GM10248 (cell line): ENCODE measurements at regions of chr16 and their contacts with region 1.

Region 1: GRCh38 chr16:22190776-22191531 is 15.1 kb upstream of the EEF2K start:
- DNase-seq: peak; percentile 95
- CTCF ChIP-seq: no peak

Region 2: DNA sequence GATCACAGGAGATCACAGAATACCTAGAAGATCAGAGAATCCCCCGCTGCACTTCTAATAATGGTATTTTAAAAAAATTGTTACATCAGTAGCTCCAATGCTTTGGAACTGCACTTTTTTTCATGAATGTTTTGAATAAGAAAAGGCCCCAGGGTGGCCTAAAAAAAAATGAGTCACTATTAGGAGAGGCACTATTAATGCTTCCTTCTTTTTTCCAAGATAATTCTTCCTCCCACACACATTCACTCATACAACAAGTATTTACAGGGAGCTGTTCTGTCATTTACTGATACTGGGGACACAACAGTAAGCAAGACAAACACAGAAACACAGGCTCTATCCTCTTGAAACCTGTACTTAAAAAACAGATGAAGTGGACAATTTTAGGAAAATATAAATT is 189.4 kb before region 1 on chr16:
- CTCF ChIA-PET with region 1: interaction called, 40 read pairs
- POLR2A ChIA-PET with region 1: no interaction called
- DNase-seq: no peak
- CTCF ChIP-seq: no peak

Region 3: GRCh38 chr16:22007509-22008214 is 183.3 kb before region 1 on chr16 and contains the start of gene MOSMO:
- CTCF ChIA-PET with region 1: interaction called, 21 read pairs
- POLR2A ChIA-PET with region 1: no interaction called
- DNase-seq: peak; percentile 89
- CTCF ChIP-seq: no peak

Region 4: DNA sequence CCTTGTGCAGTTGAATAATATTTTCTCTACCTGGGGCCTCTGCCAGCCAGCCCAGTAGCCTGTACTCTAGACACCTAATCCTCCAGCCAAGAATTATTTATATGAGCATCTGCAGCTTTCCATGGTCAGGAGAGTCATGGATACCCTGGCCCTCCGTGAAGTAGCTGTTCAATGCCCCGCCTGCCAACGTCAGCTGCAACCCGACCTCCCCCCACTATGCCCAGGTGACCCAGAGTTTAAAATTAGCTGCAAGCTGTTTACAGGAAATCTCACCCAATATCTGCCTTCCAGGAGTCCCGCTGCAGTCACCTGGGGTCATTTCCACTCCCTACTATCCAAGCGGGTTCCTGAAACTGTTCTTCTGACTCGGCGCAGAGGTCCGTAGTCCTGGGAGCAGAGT is 16.3 kb before region 1 on chr16:
- CTCF ChIA-PET with region 1: interaction called, 12 read pairs
- POLR2A ChIA-PET with region 1: no interaction called
- DNase-seq: no peak
- CTCF ChIP-seq: no peak

Region 5: DNA sequence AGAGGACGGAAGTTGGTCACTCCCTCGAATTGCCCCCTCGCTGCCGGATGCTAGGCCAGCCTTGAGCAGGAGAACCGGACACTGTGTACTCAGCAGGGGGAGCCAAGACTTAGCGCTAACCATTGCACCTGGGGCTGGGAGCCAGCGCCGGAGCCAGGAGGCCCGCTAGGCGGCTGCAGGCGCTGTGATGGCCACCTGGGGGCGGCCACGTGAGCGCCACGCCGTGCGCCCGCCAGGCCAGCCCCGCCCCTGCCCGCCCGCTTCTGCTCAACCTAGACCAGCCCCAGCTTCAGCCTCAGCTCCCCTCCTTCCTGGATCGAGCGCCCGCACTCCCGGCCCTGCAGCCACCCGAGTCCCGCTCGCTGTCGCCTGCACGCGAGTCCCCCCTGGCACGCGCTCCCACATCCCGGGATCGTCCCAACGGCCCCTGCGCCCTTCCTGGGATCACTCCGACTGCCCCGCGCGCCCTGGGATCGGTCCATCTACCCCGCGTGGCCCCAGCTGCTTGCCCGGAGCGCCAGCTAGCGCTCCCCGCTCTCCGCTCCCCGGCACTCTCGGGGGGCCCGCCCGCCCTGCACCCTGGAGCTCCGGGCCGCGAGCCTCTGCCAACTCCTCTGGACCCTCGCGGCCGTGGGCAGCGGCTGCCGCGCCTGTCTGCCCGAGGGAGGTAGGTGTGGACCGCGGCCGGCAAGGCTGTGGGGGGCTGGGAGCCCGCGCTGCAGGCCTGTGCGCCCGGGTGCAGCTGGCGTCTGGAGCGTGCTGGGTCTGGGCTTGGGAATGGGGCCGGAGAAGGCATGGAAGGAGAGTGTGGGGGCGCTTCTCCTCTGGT is 15.3 kb after region 1 on chr16 and contains the start of gene EEF2K:
- CTCF ChIA-PET with region 1: interaction called, 52 read pairs
- POLR2A ChIA-PET with region 1: interaction called, 3 read pairs
- DNase-seq: peak; percentile 93
- CTCF ChIP-seq: peak; percentile 87

Region 6: GRCh38 chr16:22217889-22218730 is 27.2 kb after region 1 on chr16:
- CTCF ChIA-PET with region 1: interaction called, 28 read pairs
- POLR2A ChIA-PET with region 1: no interaction called
- DNase-seq: peak; percentile 86
- CTCF ChIP-seq: no peak

Region 7: GRCh38 chr16:22297114-22297878 is 106.3 kb after region 1 on chr16 and contains the start of gene POLR3E:
- CTCF ChIA-PET with region 1: interaction called, 85 read pairs
- POLR2A ChIA-PET with region 1: no interaction called
- DNase-seq: peak; percentile 96
- CTCF ChIP-seq: peak; percentile 97